Mucosa of descending colon (tissue), 3 donors: ENCODE measurements at regions of chr6 and their contacts with region 1.

Region 1: GRCh38 chr6:68958327-68958726 is 323.2 kb downstream of the ADGRB3 start:
- DNase-seq: no peak
- ATAC-seq: no peak
- H3K4me3 ChIP-seq: no peak overlapping the region
- H3K4me1 ChIP-seq: no peaks in the 10 kb centered on the region
- CTCF ChIP-seq: no peak

Region 2: GRCh38 chr6:68876792-68877493 is 81.4 kb before region 1 on chr6:
- intact Hi-C with region 1: loop called in 1 of 2 experiments (anchors 10 kb)
- DNase-seq: no peak
- ATAC-seq: no peak
- H3K4me3 ChIP-seq: no peak overlapping the region
- H3K4me1 ChIP-seq: no peaks in the 10 kb centered on the region
- CTCF ChIP-seq: no peak

Region 3: GRCh38 chr6:69084746-69085335 is 126.5 kb after region 1 on chr6:
- intact Hi-C with region 1: no loop called
- DNase-seq: no peak
- ATAC-seq: no peak
- H3K4me3 ChIP-seq: no peak overlapping the region
- H3K4me1 ChIP-seq: no peaks in the 10 kb centered on the region
- CTCF ChIP-seq: no peak